Prostate gland (tissue), 2 donors: ENCODE measurements at regions of chr10 and their contacts with region 1.

Region 1: GRCh38 chr10:12960334-12960898 is 41.1 kb downstream of the CCDC3 start:
- DNase-seq: peak; percentile 13
- H3K4me3 ChIP-seq: no peak overlapping the region
- H3K27ac ChIP-seq: peak overlapping the region in 1 of 2 donors; percentile 42
- H3K4me1 ChIP-seq: peaks cover 4% of the 10 kb centered on the region
- H3K27me3 ChIP-seq: no peaks in the 10 kb centered on the region
- CTCF ChIP-seq: no peak
- POLR2A ChIP-seq: no peak

Region 2: GRCh38 chr10:12907656-12908055 is 52.8 kb before region 1 on chr10:
- intact Hi-C with region 1: loop called (anchors 5 kb)
- DNase-seq: no peak
- H3K4me3 ChIP-seq: no peak overlapping the region
- H3K27ac ChIP-seq: no peak overlapping the region
- H3K4me1 ChIP-seq: peaks cover 4% of the 10 kb centered on the region
- H3K27me3 ChIP-seq: no peaks in the 10 kb centered on the region
- CTCF ChIP-seq: no peak
- POLR2A ChIP-seq: no peak

Region 3: GRCh38 chr10:13206546-13207443 is 246.4 kb after region 1 on chr10:
- intact Hi-C with region 1: no loop called
- DNase-seq: no peak
- H3K4me3 ChIP-seq: no peak overlapping the region
- H3K27ac ChIP-seq: no peak overlapping the region
- H3K4me1 ChIP-seq: no peaks in the 10 kb centered on the region
- H3K27me3 ChIP-seq: no peaks in the 10 kb centered on the region
- CTCF ChIP-seq: peak in 1 of 4 experiments; percentile 12
- POLR2A ChIP-seq: no peak